ENCODE measurements at regions of chr17 and their contacts with region 1.

Region 1: GRCh38 chr17:47649153-47649971 is at the start of gene KPNB1:
- DNase-seq: peak; percentile 92

Region 2: DNA sequence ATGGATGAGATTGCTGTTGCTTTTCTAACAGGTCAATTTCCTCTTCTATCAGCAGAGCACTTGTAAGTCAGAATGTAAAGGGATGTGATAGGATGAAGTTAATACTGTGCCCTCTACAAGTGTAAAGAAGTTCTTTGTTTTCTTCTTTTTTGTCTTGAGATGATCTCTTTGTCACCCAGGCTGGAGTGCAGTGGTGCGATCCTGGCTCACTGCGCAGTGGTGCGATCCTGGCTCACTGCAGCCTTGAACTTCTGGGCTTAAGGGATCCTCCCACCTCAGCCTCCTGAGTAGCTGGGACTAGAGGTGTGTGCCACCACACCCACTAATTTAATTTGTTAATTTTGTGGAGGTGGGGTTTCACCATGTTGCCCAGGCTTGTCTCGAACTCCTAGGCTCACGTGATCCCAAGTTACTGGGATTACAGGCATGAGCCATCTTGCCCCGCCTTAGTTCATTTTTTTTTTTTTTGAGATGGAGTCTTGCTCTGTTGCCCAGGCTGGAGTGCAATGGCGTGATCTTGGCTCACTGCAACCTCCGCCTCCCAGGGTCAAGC is 21.3 kb before region 1 on chr17:
- CTCF ChIA-PET with region 1: interaction called, 3 read pairs
- POLR2A ChIA-PET with region 1: interaction called, 13 read pairs
- DNase-seq: no peak

Region 3: DNA sequence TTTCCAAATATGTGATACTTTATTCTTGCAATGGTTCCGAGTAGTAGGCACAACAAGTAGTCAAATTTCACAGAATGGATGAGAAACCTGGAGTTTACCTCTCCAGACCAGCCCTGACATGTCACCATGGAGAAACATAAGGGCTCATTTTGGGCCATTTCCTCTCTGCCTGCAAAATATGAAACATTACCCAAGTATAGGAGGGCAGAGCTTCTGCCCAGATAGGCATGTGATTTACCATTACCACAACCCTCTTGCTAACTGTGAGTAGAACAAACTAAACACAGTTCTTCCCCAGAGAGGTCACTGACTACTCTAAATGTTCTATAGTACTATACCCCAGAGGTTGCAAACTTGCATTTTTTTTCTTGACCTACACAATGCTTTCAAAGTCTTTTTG is 15.4 kb before region 1 on chr17:
- CTCF ChIA-PET with region 1: no interaction called
- POLR2A ChIA-PET with region 1: interaction called, 14 read pairs
- DNase-seq: no peak

Region 4: GRCh38 chr17:47663912-47664625 is 14.7 kb after region 1 on chr17:
- CTCF ChIA-PET with region 1: interaction called, 15 read pairs
- POLR2A ChIA-PET with region 1: interaction called, 30 read pairs
- DNase-seq: peak; percentile 68

Region 5: DNA sequence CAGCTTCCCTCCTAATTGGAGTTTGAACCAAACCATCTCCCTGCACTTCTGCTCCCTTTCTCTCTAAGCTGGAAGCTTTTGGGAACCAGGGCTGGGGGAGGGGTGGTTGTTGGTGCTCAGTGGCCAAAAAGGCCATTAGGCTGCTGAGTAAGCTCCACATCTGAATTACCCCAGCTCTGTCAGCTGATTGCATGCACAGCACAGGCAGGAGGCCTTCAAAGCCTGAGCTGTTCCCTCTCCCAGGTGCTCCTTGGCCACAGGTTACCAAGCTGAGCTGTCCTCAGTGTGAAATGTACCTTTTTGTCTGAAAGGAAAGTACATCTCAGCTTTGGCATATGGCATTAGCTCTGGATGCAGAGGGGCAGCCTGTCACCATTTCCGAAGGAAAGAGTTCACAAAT is 38.4 kb after region 1 on chr17:
- CTCF ChIA-PET with region 1: no interaction called
- POLR2A ChIA-PET with region 1: interaction called, 13 read pairs
- DNase-seq: no peak

Region 6: DNA sequence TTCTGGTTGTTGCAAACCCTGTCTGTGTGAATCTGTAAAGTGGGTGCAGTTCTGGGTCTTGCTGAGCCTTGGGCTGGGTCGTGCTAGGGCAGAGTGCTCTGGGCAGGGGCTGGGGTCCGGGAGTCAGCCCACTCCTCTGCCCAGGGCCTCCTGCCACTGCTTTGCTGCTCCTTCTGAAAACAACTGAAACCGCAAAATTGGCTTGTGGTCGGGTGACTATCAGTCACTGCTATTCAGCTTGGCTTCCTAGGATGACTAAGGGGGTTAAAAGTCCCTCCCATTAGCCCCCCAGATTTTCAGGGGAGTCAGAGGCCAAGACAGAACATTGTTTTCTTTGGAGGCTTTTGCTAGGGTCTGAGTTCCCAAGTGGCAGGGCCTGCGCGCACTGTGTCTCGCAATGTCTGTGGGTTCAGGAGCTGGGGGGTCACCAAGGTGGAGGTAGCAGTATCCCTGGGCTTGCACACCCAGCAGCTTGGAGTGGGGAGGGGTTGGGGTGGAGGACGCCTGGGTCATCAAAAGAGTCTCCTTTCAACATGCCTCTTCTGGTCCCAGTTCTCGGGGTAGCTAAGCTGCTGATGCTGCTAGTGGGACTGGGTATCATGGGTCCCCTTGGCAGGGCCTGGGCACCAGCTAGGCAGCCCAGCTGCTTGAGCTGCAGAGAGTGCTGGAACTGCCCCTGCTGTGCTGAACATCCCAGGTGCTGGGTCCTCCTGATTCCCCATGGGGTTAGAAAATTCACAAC is 70.2 kb after region 1 on chr17:
- CTCF ChIA-PET with region 1: no interaction called
- POLR2A ChIA-PET with region 1: no interaction called
- DNase-seq: no peak

Region 7: GRCh38 chr17:47733047-47733673 is 83.8 kb after region 1 on chr17 and contains the start of gene TBX21:
- CTCF ChIA-PET with region 1: no interaction called
- POLR2A ChIA-PET with region 1: interaction called, 10 read pairs
- DNase-seq: peak; percentile 88

Measured in HEK293T (cell line).